ENCODE measurements at regions of chr5 and their contacts with region 1.

Region 1: DNA sequence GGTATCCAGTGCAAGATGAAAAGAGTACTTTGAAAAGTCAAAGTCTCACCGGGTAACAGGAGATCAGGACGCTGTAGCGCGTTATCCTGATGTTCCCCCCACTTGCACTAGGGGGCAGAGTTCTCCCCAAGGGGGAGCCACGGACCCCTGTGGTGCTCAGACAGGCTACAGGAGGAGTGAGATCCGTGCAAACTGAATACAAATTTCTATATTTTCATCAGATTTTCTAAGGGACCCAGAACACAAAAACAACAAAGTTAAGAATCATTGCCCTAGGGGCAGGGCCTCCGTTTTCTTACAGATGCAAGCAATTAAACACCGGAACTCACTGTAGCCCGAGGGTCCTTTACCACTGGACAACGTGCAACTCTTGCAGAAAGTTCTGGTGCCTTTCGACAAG is 2.0 kb downstream of the MYO10 start:
- DNase-seq: peak; percentile 63
- ATAC-seq: peak; percentile 50
- H3K4me3 ChIP-seq: peak overlapping the region; percentile 81 to 82; a peak in 3 of 4 replicates
- H3K27ac ChIP-seq: no peak overlapping the region
- H3K4me1 ChIP-seq: peaks cover 28 to 34% of the 10 kb centered on the region in 2 experiments
- H3K27me3 ChIP-seq: peaks cover 5% of the 10 kb centered on the region; the same call in 1 of the 2 replicates
- CTCF ChIP-seq: peak; percentile 52 to 94 (median 92); a peak in 5 of 6 replicates
- POLR2A ChIP-seq: no peak
- RAD21 ChIP-seq: peak; percentile 65

Region 2: DNA sequence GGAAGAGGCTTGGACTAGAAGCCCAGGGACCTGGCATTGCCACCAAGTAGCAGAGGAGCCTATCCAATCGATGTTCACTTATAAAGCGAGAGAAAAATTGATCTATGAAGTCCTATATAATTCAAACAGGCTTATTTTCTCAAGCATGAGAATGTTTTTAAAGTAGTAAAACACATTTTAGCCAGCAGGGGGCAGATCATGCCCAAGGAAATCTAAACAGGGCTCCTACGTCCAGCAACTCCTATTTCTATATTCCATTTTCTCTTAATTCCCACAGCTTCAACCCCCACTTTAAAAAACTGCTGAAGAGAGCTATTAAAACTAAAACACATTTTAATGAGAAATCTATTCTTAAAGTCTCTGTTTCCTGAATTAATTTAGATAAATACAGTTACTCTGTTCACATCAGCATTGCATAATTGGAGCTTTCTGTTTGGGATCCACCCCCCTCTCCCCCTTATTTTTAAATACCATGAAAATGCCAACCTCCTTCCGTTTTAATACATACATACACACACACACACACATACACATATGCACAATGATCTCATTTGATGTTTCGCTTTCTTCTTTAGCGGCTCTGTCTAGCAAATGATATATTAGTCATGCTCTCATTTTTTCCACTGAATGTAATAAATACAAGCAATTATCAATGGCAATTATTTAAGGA is 143.0 kb before region 1 on chr5:
- CTCF ChIA-PET with region 1: no interaction called
- POLR2A ChIA-PET with region 1: no interaction called
- RAD21 ChIA-PET with region 1: no interaction called
- intact Hi-C with region 1: loop called (anchors 2 kb)
- DNase-seq: peak; percentile 37
- ATAC-seq: peak; percentile 62
- H3K4me3 ChIP-seq: no peak overlapping the region
- H3K27ac ChIP-seq: no peak overlapping the region
- H3K4me1 ChIP-seq: no peaks in the 10 kb centered on the region
- H3K27me3 ChIP-seq: no peaks in the 10 kb centered on the region
- CTCF ChIP-seq: peak; percentile 49 to 69 (median 56); a peak in 5 of 6 replicates
- POLR2A ChIP-seq: no peak
- RAD21 ChIP-seq: peak; percentile 78

Region 3: GRCh38 chr5:16871746-16872339 is 62.3 kb before region 1 on chr5:
- CTCF ChIA-PET with region 1: no interaction called
- POLR2A ChIA-PET with region 1: no interaction called
- RAD21 ChIA-PET with region 1: interaction called in 1 of 2 experiments, 3 read pairs
- intact Hi-C with region 1: loop called (anchors 5 kb)
- DNase-seq: no peak
- ATAC-seq: no peak
- H3K4me3 ChIP-seq: peak overlapping the region in 1 of 2 experiments; percentile 1; a peak in 1 of 4 replicates
- H3K27ac ChIP-seq: peak overlapping the region; percentile 77; the same call in 1 of the 2 replicates
- H3K4me1 ChIP-seq: peaks cover 37 to 44% of the 10 kb centered on the region in 2 experiments
- H3K27me3 ChIP-seq: no peaks in the 10 kb centered on the region
- CTCF ChIP-seq: no peak
- POLR2A ChIP-seq: no peak
- RAD21 ChIP-seq: no peak

Region 4: GRCh38 chr5:17061973-17062470 is 127.9 kb after region 1 on chr5:
- CTCF ChIA-PET with region 1: no interaction called
- POLR2A ChIA-PET with region 1: no interaction called
- RAD21 ChIA-PET with region 1: no interaction called
- intact Hi-C with region 1: no loop called
- DNase-seq: no peak
- ATAC-seq: no peak
- H3K4me3 ChIP-seq: no peak overlapping the region
- H3K27ac ChIP-seq: no peak overlapping the region
- H3K4me1 ChIP-seq: peaks cover 0 to 3% of the 10 kb centered on the region in 2 experiments; a peak in 2 of 4 replicates
- H3K27me3 ChIP-seq: no peaks in the 10 kb centered on the region
- CTCF ChIP-seq: no peak
- POLR2A ChIP-seq: no peak
- RAD21 ChIP-seq: no peak